A549 (cell line): ENCODE measurements at regions of chr2 and their contacts with region 1.

Region 1: GRCh38 chr2:105344704-105345345 is 7.5 kb downstream of the C2orf49 start:
- DNase-seq: peak; percentile 18 to 44
- ATAC-seq: peak; percentile 74 to 85; a peak in 5 of 6 replicates
- H3K4me3 ChIP-seq: no peak overlapping the region
- H3K27ac ChIP-seq: no peak overlapping the region
- H3K4me1 ChIP-seq: no peaks in the 10 kb centered on the region
- CTCF ChIP-seq: peak; percentile 70
- EP300 ChIP-seq: no peak
- POLR2A ChIP-seq: no peak
- RAD21 ChIP-seq: peak; percentile 53 to 73

Region 2: GRCh38 chr2:105328281-105329196 is 16.3 kb before region 1 on chr2:
- CTCF ChIA-PET with region 1: no interaction called
- POLR2A ChIA-PET with region 1: no interaction called
- DNase-seq: peak in 1 of 2 experiments; percentile 20
- ATAC-seq: peak; percentile 22 to 33; a peak in 4 of 6 replicates
- H3K4me3 ChIP-seq: peak overlapping the region; percentile 80
- H3K27ac ChIP-seq: peak overlapping the region; percentile 98 to 99
- H3K4me1 ChIP-seq: peaks cover 22% of the 10 kb centered on the region; the same call in 2 of the 3 replicates
- CTCF ChIP-seq: no peak
- EP300 ChIP-seq: no peak
- POLR2A ChIP-seq: no peak
- RAD21 ChIP-seq: no peak

Region 3: GRCh38 chr2:105357122-105357521 is 12.3 kb after region 1 on chr2:
- CTCF ChIA-PET with region 1: interaction called, 16 read pairs
- POLR2A ChIA-PET with region 1: no interaction called
- DNase-seq: no peak
- ATAC-seq: no peak
- H3K4me3 ChIP-seq: no peak overlapping the region
- H3K27ac ChIP-seq: no peak overlapping the region
- H3K4me1 ChIP-seq: no peaks in the 10 kb centered on the region
- CTCF ChIP-seq: no peak
- EP300 ChIP-seq: no peak
- POLR2A ChIP-seq: no peak
- RAD21 ChIP-seq: no peak

Region 4: DNA sequence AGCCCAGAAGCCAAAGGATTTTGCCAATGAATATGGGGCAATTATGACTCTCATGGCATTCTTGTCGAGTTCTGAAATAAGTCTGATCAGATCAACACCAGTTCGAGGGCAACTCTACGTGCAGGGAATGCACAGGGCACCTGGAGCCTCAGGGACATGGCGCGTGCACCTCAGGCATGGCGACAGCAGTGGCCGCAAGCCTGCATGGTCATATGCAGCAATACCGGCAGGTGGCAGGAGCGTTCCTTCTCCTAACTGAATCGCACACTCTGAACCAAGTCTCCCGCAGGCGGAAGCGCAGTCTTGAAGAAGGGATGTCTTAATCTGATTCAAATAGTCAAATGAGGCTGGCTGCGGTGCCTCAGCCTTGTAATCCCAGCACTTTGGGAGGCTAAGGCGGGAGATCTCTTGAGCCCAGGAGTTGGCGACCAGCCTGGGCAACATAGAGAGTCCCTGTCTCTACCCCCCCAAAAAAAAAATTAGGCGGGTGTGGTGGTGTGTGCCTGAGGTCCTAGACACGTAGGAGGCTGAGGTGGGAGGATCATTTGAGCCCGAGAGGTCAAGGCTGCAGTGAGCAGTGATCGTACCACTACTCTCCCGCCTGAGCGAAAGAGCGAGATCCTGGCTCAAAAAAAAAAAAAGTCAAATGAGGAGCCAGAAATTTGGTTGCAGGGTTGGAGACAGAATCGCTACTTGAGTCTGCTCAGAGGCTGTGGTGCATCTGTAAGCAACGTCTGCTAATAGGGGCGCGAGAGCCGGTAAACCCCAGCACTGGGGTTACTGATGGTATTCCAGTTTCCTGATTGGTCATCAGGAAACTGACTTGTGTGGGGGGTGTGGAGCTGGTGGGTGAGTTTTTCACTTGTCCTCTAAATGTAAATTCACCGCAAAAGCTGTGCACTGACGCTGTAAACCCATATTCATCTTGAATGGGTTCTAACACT is 25.2 kb after region 1 on chr2:
- CTCF ChIA-PET with region 1: interaction called, 11 read pairs
- POLR2A ChIA-PET with region 1: no interaction called
- DNase-seq: peak; percentile 58 to 86
- ATAC-seq: peak; percentile 94 to 97
- H3K4me3 ChIP-seq: no peak overlapping the region
- H3K27ac ChIP-seq: peak overlapping the region; percentile 12 to 74; a peak in 4 of 6 replicates
- H3K4me1 ChIP-seq: peaks cover 8% of the 10 kb centered on the region; the same call in 2 of the 3 replicates
- CTCF ChIP-seq: peak; percentile 89
- EP300 ChIP-seq: no peak
- POLR2A ChIP-seq: no peak
- RAD21 ChIP-seq: peak; percentile 93 to 95

Region 5: DNA sequence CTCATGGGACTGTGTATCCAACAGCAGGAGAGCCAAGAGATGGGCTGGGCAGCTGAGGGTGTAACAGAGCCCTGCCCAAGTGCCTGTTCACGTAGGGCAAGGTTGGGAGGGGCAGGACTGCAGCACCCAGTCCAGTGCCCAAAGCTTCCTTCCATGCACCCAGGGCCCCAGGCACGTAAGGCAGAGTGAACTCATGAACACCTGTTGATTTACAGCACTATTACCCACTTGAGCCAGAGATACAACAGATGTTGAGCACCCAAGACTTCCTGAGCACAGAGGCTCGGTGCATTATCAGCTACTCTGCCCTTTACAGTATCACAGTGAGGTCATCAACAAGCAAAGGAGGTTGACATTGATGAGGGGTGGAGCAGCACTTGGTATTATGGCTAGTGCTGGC is 104.3 kb after region 1 on chr2:
- CTCF ChIA-PET with region 1: no interaction called
- POLR2A ChIA-PET with region 1: no interaction called
- DNase-seq: peak in 1 of 2 experiments; percentile 3
- ATAC-seq: no peak
- H3K4me3 ChIP-seq: no peak overlapping the region
- H3K27ac ChIP-seq: peak overlapping the region in 1 of 2 experiments; percentile 4; a peak in 1 of 6 replicates
- H3K4me1 ChIP-seq: peaks cover 15% of the 10 kb centered on the region
- CTCF ChIP-seq: no peak
- EP300 ChIP-seq: no peak
- POLR2A ChIP-seq: no peak
- RAD21 ChIP-seq: no peak

Region 6: DNA sequence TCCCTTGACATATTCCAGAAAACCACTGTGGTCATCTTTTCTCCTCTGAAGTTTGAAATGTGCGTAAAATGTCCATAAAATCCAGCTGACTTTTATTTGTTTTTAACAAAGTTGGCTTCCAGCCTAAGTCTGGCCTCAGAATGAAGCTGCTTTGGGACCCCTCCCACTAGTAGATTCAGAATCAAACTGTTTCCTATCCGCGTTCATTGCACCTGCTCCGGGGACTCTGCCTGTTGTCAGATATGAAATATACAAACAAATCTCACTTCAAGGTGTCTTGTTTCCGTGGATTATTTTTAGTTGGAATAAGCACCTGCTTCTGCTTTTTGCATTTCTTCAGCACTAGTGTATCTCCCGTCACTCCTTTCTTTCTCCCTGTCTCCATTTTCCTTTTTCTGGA is 169.8 kb after region 1 on chr2:
- CTCF ChIA-PET with region 1: interaction called, 54 read pairs
- POLR2A ChIA-PET with region 1: no interaction called
- DNase-seq: no peak
- ATAC-seq: no peak
- H3K4me3 ChIP-seq: no peak overlapping the region
- H3K27ac ChIP-seq: no peak overlapping the region
- H3K4me1 ChIP-seq: peaks cover 18% of the 10 kb centered on the region
- CTCF ChIP-seq: no peak
- EP300 ChIP-seq: no peak
- POLR2A ChIP-seq: no peak
- RAD21 ChIP-seq: no peak